K562 (cell line): ENCODE measurements at regions of chr18 and their contacts with region 1.

Region 1: GRCh38 chr18:48022531-48023329 is 92.3 kb upstream of the SMAD2 start:
- DNase-seq: peak; percentile 50 to 61 (median 56)
- ATAC-seq: peak; percentile 91
- H3K4me3 ChIP-seq: no peak overlapping the region
- H3K27ac ChIP-seq: no peak overlapping the region
- H3K4me1 ChIP-seq: no peaks in the 10 kb centered on the region; a peak in 1 of 5 replicates
- H3K27me3 ChIP-seq: peaks cover 0 to 22% of the 10 kb centered on the region in 2 experiments; a peak in 3 of 5 replicates
- CTCF ChIP-seq: peak; percentile 57 to 78 (median 70)
- EP300 ChIP-seq: no peak
- POLR2A ChIP-seq: no peak
- RAD21 ChIP-seq: peak; percentile 83 to 89

Region 2: DNA sequence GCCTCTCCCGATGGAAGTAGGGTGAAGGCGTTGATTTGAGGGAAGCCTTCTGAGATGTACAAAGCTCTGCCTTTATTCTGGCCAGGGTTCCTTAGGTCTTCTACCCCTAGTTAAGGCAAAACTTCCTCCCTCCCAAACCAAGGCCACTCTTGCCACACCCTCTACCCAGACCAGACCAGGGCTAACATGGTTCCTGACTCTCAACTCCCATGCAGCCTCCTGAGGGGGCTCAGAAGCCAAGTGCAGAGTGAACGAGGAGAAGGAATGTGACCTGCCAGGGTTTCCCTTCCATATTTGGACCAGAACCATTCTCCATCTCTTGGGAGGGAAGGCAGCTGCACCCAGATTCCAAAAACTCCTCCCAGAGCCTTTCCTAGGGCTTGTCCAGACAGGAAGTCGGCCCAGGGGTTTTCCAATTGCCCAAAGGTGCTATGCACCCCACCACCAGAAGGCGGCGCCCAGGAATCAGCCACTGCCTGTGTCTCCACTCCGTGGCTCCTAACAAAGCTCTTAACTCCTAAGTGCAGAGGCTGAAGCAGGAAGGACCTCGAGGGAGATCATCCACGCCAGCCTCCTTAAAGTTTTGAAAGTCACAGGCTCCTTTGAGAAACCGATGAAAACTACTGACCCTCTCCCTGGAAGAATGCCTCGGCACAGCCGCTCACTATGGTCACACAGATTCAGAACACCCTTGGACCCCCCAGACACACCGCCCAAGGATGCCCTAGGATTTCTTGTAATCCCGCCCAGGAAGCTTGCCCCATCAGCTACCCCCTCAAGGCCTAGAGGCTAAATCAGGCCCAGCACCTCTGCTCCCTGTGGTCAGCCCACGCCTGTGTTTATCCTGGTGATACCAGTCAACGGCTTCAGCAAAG is 250.1 kb before region 1 on chr18:
- CTCF ChIA-PET with region 1: interaction called, 23 read pairs
- POLR2A ChIA-PET with region 1: no interaction called
- in situ Hi-C with region 1: loop called (anchors 5 kb)
- intact Hi-C with region 1: loop called (anchors 1 kb)
- DNase-seq: peak; percentile 47 to 65 (median 52)
- ATAC-seq: peak; percentile 89
- H3K4me3 ChIP-seq: no peak overlapping the region
- H3K27ac ChIP-seq: no peak overlapping the region
- H3K4me1 ChIP-seq: no peaks in the 10 kb centered on the region
- H3K27me3 ChIP-seq: peaks cover 0 to 4% of the 10 kb centered on the region in 2 experiments; a peak in 2 of 5 replicates
- CTCF ChIP-seq: peak; percentile 80 to 85 (median 81)
- EP300 ChIP-seq: no peak
- POLR2A ChIP-seq: no peak
- RAD21 ChIP-seq: peak; percentile 54 to 86

Region 3: DNA sequence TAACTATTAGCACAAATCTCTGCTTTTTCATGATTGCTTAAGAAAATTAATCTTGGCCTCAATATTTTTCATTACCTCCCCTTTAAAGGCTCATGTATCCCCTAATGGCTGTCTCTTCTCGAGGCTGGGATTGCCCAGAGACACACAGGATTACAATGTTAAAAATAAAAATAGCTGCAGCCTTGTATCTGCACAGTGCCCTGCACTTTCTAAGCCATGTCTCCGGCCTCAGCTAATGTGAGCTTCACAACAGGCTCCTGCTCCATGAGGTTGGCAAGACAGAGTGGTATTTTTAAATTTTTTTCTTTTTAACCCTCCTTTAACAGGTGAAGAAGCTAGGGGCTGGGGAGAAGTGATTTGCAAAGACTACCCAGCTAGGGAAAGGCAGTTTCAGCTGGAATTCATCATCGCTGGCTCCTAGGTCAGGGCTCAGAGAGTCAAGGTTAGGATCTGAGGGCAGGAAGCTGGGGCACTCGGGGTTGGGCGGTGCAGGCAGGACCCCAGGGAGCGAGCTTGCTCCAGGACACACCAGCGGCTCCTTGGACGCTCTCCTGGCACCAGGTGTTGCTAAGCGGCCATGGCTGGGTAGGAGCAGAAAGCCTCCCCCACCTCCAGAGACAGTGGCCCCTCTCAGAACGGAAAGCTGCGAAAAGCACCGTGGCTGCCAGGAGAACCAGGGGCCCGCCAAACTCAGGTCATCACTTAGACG is 227.9 kb before region 1 on chr18:
- CTCF ChIA-PET with region 1: no interaction called
- POLR2A ChIA-PET with region 1: no interaction called
- in situ Hi-C with region 1: loop called (anchors 5 kb)
- intact Hi-C with region 1: no loop called
- DNase-seq: no peak
- ATAC-seq: no peak
- H3K4me3 ChIP-seq: no peak overlapping the region
- H3K27ac ChIP-seq: no peak overlapping the region
- H3K4me1 ChIP-seq: no peaks in the 10 kb centered on the region
- H3K27me3 ChIP-seq: peaks cover 0 to 39% of the 10 kb centered on the region in 2 experiments; a peak in 4 of 5 replicates
- CTCF ChIP-seq: no peak
- EP300 ChIP-seq: no peak
- POLR2A ChIP-seq: no peak
- RAD21 ChIP-seq: no peak

Region 4: GRCh38 chr18:47930931-47931717 is 91.6 kb before region 1 on chr18:
- CTCF ChIA-PET with region 1: interaction called, 7 read pairs
- POLR2A ChIA-PET with region 1: no interaction called
- in situ Hi-C with region 1: no loop called
- intact Hi-C with region 1: loop called (anchors 1 kb)
- DNase-seq: peak; percentile 89 to 95 (median 91)
- ATAC-seq: peak; percentile 89
- H3K4me3 ChIP-seq: peak overlapping the region; percentile 92
- H3K27ac ChIP-seq: peak overlapping the region; percentile 91
- H3K4me1 ChIP-seq: peaks cover 15 to 21% of the 10 kb centered on the region in 2 experiments
- H3K27me3 ChIP-seq: no peaks in the 10 kb centered on the region
- CTCF ChIP-seq: no peak
- EP300 ChIP-seq: no peak
- POLR2A ChIP-seq: peak; percentile 78
- RAD21 ChIP-seq: no peak

Region 5: DNA sequence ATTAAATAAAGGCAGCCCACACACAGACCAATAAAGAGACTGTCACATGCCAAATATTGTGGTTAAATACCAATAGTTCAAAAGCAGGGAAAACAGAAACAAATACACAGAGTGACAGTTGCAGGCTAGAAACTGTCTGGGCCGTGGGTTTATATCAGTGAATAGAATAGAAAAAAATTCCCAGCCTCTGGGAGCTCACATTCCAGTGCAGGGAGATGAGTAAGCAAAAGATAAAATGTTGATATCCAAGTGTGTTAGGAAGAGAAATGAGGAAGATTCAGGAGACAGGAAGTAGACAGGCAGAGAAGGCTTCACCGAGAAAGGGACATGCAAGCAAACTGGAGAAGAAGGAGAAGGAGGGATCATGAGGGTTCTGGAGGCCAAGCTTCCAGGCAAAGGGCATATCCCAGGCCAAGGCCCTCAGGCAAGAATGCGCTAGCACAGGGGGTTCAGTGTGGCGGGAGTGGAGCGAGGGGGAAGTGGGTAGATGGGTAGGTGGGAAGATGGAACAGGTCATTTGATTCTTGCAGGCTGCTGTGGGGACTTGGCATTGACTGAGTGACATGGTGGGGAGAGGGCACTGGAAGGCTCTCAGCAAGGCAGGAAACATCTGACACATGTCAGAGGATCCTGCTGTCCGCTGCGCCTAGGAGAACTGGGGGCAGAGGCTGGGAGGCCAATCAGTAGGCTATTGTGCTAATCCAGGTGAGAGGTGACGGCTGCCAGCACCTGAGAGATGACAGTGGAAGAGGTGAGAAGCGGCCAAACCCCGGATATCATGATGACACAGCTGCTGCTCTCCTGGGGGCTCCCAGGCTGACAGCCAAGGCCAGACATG is 297.3 kb after region 1 on chr18:
- CTCF ChIA-PET with region 1: no interaction called
- POLR2A ChIA-PET with region 1: no interaction called
- in situ Hi-C with region 1: no loop called
- intact Hi-C with region 1: loop called (anchors 10 kb)
- DNase-seq: no peak
- ATAC-seq: no peak
- H3K4me3 ChIP-seq: no peak overlapping the region
- H3K27ac ChIP-seq: no peak overlapping the region
- H3K4me1 ChIP-seq: no peaks in the 10 kb centered on the region
- H3K27me3 ChIP-seq: peaks cover 0 to 3% of the 10 kb centered on the region in 2 experiments; a peak in 1 of 5 replicates
- CTCF ChIP-seq: no peak
- EP300 ChIP-seq: no peak
- POLR2A ChIP-seq: no peak
- RAD21 ChIP-seq: no peak

Region 6: GRCh38 chr18:48445540-48445939 is 422.8 kb after region 1 on chr18:
- CTCF ChIA-PET with region 1: no interaction called
- POLR2A ChIA-PET with region 1: no interaction called
- in situ Hi-C with region 1: loop called (anchors 10 kb)
- intact Hi-C with region 1: no loop called
- DNase-seq: peak; percentile 48 to 70 (median 58)
- ATAC-seq: peak; percentile 94
- H3K4me3 ChIP-seq: no peak overlapping the region
- H3K27ac ChIP-seq: no peak overlapping the region
- H3K4me1 ChIP-seq: no peaks in the 10 kb centered on the region
- H3K27me3 ChIP-seq: peaks cover 2 to 20% of the 10 kb centered on the region in 2 experiments; a peak in 4 of 5 replicates
- CTCF ChIP-seq: peak; percentile 74 to 80 (median 79)
- EP300 ChIP-seq: no peak
- POLR2A ChIP-seq: no peak
- RAD21 ChIP-seq: peak; percentile 21 to 60; a peak in 3 of 4 replicates